IMR-90 (cell line): ENCODE measurements at regions of chr9 and their contacts with region 1.

Region 1: GRCh38 chr9:110538225-110539041 is 41.1 kb downstream of the SVEP1 start:
- DNase-seq: peak; percentile 75
- ATAC-seq: peak; percentile 79
- H3K4me3 ChIP-seq: no peak overlapping the region
- H3K27ac ChIP-seq: peak overlapping the region; percentile 63; the same call in 1 of the 2 replicates
- H3K4me1 ChIP-seq: peaks cover 6% of the 10 kb centered on the region
- H3K27me3 ChIP-seq: no peaks in the 10 kb centered on the region
- CTCF ChIP-seq: no peak
- POLR2A ChIP-seq: no peak
- RAD21 ChIP-seq: no peak

Region 2: DNA sequence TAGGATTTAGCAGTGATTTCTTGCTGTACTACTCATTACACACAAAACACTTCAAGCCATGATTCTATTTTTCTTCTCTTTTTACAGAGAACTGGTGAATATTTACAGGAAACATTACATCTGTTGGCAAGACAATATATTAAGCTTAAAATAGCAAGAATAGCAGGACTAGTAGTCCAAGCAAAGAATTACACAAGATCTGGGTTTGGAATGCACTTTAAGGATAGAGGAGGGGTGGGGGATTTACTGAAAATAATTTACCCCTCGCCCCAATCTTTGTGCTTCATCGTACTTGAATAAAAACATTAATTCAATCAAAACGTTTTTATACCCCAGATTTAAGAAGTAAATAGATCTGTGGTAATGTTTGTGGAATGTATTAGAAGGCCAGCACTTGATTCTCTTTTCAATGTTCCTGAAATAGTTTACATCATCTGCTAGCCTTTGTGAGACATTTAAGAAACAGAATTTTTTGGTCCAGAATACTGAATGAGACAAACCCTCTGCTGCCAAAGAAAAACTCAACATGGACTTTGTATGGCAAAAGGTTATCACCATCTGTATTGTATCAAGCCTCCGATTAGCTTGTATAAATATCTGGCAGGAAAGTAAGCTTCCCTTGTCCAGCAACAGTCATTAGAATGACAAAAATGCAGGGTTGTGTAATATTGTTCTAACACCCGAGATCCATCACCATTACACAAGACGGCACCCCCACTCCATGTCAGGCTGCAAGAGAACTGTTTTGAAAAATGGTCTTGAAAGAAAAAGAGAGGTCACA is 17.3 kb after region 1 on chr9:
- CTCF ChIA-PET with region 1: interaction called, 3 read pairs
- POLR2A ChIA-PET with region 1: no interaction called
- dilution Hi-C with region 1: no loop called
- in situ Hi-C with region 1: no loop called
- intact Hi-C with region 1: loop called (anchors 2 kb)
- DNase-seq: peak; percentile 88
- ATAC-seq: peak; percentile 79
- H3K4me3 ChIP-seq: no peak overlapping the region
- H3K27ac ChIP-seq: peak overlapping the region; percentile 100; the same call in 1 of the 2 replicates
- H3K4me1 ChIP-seq: peaks cover 12% of the 10 kb centered on the region
- H3K27me3 ChIP-seq: no peaks in the 10 kb centered on the region
- CTCF ChIP-seq: no peak
- POLR2A ChIP-seq: no peak
- RAD21 ChIP-seq: no peak

Region 3: GRCh38 chr9:110579034-110579861 is 40.8 kb after region 1 on chr9 and contains the start of gene SVEP1:
- CTCF ChIA-PET with region 1: no interaction called
- POLR2A ChIA-PET with region 1: interaction called, 4 read pairs
- dilution Hi-C with region 1: no loop called
- in situ Hi-C with region 1: no loop called
- intact Hi-C with region 1: loop called (anchors 5 kb)
- DNase-seq: peak; percentile 77
- ATAC-seq: peak; percentile 61
- H3K4me3 ChIP-seq: peak within 1 kb of the TSS; percentile 51
- H3K27ac ChIP-seq: peak within 1 kb of the TSS; percentile 85
- H3K4me1 ChIP-seq: peaks cover 15% of the 10 kb centered on the region
- H3K27me3 ChIP-seq: no peaks in the 10 kb centered on the region
- CTCF ChIP-seq: no peak
- POLR2A ChIP-seq: peak; percentile 55
- RAD21 ChIP-seq: no peak
- total RNA-seq, gene SVEP1: 13.1 and 16.7 TPM in 2 replicates

Region 4: DNA sequence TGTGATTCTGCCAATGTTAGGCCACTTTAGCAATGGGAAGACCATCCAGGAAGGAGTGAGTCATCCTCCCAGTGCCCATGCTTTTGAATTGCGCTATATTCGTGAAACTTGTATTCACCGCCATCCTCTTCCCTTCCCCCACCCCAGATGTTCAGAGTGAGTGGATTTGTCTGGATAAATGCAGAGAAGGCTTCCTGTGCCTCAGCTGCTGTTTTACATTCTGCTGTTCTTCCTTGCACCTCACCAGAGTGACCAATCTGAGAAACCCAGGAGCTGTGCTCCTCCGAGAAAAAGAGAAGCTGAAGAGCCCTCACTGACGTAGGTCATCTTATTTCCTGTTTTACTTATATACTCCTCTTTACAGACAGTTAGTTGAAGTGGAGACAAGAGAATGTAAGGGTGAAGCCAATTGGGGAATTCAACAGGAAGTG is 65.8 kb after region 1 on chr9:
- CTCF ChIA-PET with region 1: no interaction called
- POLR2A ChIA-PET with region 1: no interaction called
- dilution Hi-C with region 1: no loop called
- in situ Hi-C with region 1: no loop called
- intact Hi-C with region 1: no loop called
- DNase-seq: no peak
- ATAC-seq: no peak
- H3K4me3 ChIP-seq: no peak overlapping the region
- H3K27ac ChIP-seq: no peak overlapping the region
- H3K4me1 ChIP-seq: peaks cover 6% of the 10 kb centered on the region
- H3K27me3 ChIP-seq: no peaks in the 10 kb centered on the region
- CTCF ChIP-seq: no peak
- POLR2A ChIP-seq: no peak
- RAD21 ChIP-seq: no peak

Region 5: GRCh38 chr9:110714314-110714713 is 175.9 kb after region 1 on chr9:
- CTCF ChIA-PET with region 1: no interaction called
- POLR2A ChIA-PET with region 1: no interaction called
- dilution Hi-C with region 1: no loop called
- in situ Hi-C with region 1: no loop called
- intact Hi-C with region 1: no loop called
- DNase-seq: peak; percentile 50
- ATAC-seq: peak; percentile 62
- H3K4me3 ChIP-seq: no peak overlapping the region
- H3K27ac ChIP-seq: peak overlapping the region; percentile 52; the same call in 1 of the 2 replicates
- H3K4me1 ChIP-seq: peaks cover 9% of the 10 kb centered on the region
- H3K27me3 ChIP-seq: no peaks in the 10 kb centered on the region
- CTCF ChIP-seq: no peak
- POLR2A ChIP-seq: no peak
- RAD21 ChIP-seq: no peak